Naive thymus-derived CD4-positive, alpha-beta T cell (primary cell): ENCODE measurements at regions of chr12 and their contacts with region 1.

Region 1: DNA sequence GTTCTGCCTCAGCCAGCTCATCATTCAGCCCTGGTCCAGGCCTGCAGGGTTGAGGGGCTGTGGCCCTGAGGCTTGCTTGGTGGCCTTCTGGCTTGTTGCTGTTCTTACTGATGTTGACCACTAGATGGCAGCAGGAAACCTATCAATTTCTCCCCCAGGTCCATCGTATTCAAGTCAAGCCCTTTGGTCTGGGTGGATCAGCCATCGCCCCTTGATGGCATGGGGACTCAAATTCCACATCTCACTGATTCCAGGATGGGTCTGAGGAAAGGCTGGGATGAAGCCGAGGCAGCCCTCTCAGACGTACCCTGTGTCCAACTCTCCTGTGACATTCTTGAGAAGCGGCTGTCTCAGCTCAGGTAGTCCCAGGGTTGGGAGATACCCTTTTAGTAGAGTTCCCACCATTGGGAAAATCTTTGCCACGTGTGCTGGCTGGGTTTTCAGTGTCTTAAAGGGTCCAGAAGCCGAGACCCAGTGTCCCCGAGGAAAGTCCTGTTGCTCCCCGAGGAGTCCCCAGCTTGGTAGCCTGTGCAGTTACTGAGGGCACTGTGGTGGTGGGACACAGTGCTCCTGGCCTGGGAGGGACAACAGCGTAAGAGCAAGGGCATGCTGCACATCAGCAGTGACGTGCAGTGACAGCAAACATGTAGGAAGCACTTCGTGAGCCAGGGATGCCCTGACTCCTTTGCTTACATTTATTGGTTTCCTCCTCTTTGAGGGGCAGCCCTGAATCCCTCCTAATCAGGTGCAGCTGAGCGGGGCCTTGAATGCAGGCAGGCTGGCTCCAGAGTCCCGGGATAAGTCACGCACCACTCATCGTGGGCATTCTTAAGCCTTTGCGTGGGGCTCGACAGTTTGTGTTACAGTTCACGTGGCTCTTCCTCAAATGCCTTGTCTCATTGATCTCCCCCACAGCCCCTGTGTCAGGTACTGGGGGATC is 58.6 kb downstream of the TSPAN9 start:
- DNase-seq: peak in 8 of 9 donors; percentile 18 to 55 (median 38)
- ATAC-seq: peak; percentile 69
- H3K4me3 ChIP-seq: no peak overlapping the region
- H3K4me3 Mint-ChIP-seq: no peak overlapping the region
- H3K27ac ChIP-seq: no peak overlapping the region
- H3K27ac Mint-ChIP-seq: no peak overlapping the region
- H3K4me1 ChIP-seq: no peaks in the 10 kb centered on the region
- H3K4me1 Mint-ChIP-seq: peaks cover 2 to 7% (median 3%) of the 10 kb centered on the region in 7 donors
- H3K27me3 ChIP-seq: peaks cover 0 to 9% of the 10 kb centered on the region in 2 donors
- H3K27me3 Mint-ChIP-seq: peaks cover 22 to 56% (median 46%) of the 10 kb centered on the region in 5 donors

Region 2: GRCh38 chr12:2431810-2432209 is 704.0 kb before region 1 on chr12:
- CTCF ChIA-PET with region 1: no interaction called
- POLR2A ChIA-PET with region 1: no interaction called
- intact Hi-C with region 1: no loop called
- DNase-seq: no peak
- ATAC-seq: no peak
- H3K4me3 ChIP-seq: no peak overlapping the region
- H3K4me3 Mint-ChIP-seq: no peak overlapping the region
- H3K27ac ChIP-seq: no peak overlapping the region
- H3K27ac Mint-ChIP-seq: no peak overlapping the region
- H3K4me1 ChIP-seq: no peaks in the 10 kb centered on the region
- H3K4me1 Mint-ChIP-seq: no peaks in the 10 kb centered on the region
- H3K27me3 ChIP-seq: no peaks in the 10 kb centered on the region
- H3K27me3 Mint-ChIP-seq: peaks cover 2 to 23% (median 17%) of the 10 kb centered on the region in 5 donors

Region 3: GRCh38 chr12:2974560-2974971 is 161.2 kb before region 1 on chr12:
- CTCF ChIA-PET with region 1: no interaction called
- POLR2A ChIA-PET with region 1: no interaction called
- intact Hi-C with region 1: no loop called
- DNase-seq: no peak
- ATAC-seq: no peak
- H3K4me3 ChIP-seq: no peak overlapping the region
- H3K4me3 Mint-ChIP-seq: no peak overlapping the region
- H3K27ac ChIP-seq: no peak overlapping the region
- H3K27ac Mint-ChIP-seq: no peak overlapping the region
- H3K4me1 ChIP-seq: no peaks in the 10 kb centered on the region
- H3K4me1 Mint-ChIP-seq: peaks cover 0 to 4% (median 0%) of the 10 kb centered on the region in 7 donors
- H3K27me3 ChIP-seq: no peaks in the 10 kb centered on the region
- H3K27me3 Mint-ChIP-seq: peaks cover 0 to 17% (median 6%) of the 10 kb centered on the region in 5 donors

Region 4: DNA sequence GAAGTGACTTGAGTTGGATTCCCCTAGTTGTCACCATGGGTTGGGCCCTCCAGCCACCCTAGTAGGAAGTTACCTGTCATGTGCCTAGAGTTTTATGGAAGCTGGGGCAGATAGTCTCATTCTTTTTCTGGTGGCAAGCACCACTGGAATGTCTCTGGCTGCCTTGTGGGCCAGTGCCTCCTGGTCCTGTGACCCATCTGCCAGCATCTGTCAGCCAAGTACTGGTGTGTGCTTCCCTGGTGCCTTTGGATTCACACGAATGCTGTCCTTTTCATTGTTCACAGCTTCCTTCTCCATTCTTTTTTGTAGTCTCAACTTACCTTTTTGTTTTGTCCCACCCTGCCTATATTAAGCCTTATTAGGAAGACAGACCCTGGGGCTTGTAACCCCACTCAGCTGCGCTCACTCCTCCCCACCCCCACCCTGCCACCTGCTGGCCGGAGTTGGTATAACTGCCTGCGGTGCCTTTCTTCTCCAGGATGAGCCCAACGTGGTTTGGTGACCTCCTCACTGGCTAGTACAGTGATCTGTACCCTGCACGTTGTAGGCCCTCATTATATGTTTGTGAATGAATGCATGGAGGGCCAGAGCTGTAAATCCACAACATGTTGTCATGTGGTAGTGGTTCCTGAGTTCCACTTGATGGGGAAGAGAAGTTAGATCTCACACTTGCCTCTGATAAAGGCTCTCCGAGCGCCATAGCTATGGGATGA is 67.1 kb after region 1 on chr12:
- CTCF ChIA-PET with region 1: no interaction called
- POLR2A ChIA-PET with region 1: no interaction called
- intact Hi-C with region 1: loop called (anchors 1 kb)
- DNase-seq: peak in 8 of 9 donors; percentile 17 to 62 (median 31)
- ATAC-seq: peak; percentile 64
- H3K4me3 ChIP-seq: no peak overlapping the region
- H3K4me3 Mint-ChIP-seq: peak overlapping the region in 1 of 10 donors; percentile 1
- H3K27ac ChIP-seq: no peak overlapping the region
- H3K27ac Mint-ChIP-seq: no peak overlapping the region
- H3K4me1 ChIP-seq: no peaks in the 10 kb centered on the region
- H3K4me1 Mint-ChIP-seq: peaks cover 0 to 10% (median 8%) of the 10 kb centered on the region in 7 donors
- H3K27me3 ChIP-seq: peaks cover 0 to 3% of the 10 kb centered on the region in 2 donors
- H3K27me3 Mint-ChIP-seq: peaks cover 29 to 41% (median 33%) of the 10 kb centered on the region in 5 donors

Region 5: GRCh38 chr12:3236345-3237187 is 100.8 kb after region 1 on chr12:
- CTCF ChIA-PET with region 1: no interaction called
- POLR2A ChIA-PET with region 1: no interaction called
- intact Hi-C with region 1: no loop called
- DNase-seq: no peak
- ATAC-seq: no peak
- H3K4me3 ChIP-seq: no peak overlapping the region
- H3K4me3 Mint-ChIP-seq: no peak overlapping the region
- H3K27ac ChIP-seq: no peak overlapping the region
- H3K27ac Mint-ChIP-seq: no peak overlapping the region
- H3K4me1 ChIP-seq: no peaks in the 10 kb centered on the region
- H3K4me1 Mint-ChIP-seq: no peaks in the 10 kb centered on the region
- H3K27me3 ChIP-seq: no peaks in the 10 kb centered on the region
- H3K27me3 Mint-ChIP-seq: peaks cover 0 to 24% (median 0%) of the 10 kb centered on the region in 5 donors

Region 6: GRCh38 chr12:3275171-3276041 is 139.6 kb after region 1 on chr12:
- CTCF ChIA-PET with region 1: interaction called, 5 read pairs
- POLR2A ChIA-PET with region 1: no interaction called
- intact Hi-C with region 1: loop called in 1 of 2 experiments (anchors 1 kb)
- DNase-seq: peak; percentile 24 to 75 (median 62)
- ATAC-seq: peak; percentile 74
- H3K4me3 ChIP-seq: no peak overlapping the region
- H3K4me3 Mint-ChIP-seq: peak overlapping the region in 3 of 10 donors; percentile 19 to 34 (median 32)
- H3K27ac ChIP-seq: no peak overlapping the region
- H3K27ac Mint-ChIP-seq: no peak overlapping the region
- H3K4me1 ChIP-seq: no peaks in the 10 kb centered on the region
- H3K4me1 Mint-ChIP-seq: no peaks in the 10 kb centered on the region
- H3K27me3 ChIP-seq: no peaks in the 10 kb centered on the region
- H3K27me3 Mint-ChIP-seq: peaks cover 5 to 30% (median 11%) of the 10 kb centered on the region in 5 donors

Region 7: DNA sequence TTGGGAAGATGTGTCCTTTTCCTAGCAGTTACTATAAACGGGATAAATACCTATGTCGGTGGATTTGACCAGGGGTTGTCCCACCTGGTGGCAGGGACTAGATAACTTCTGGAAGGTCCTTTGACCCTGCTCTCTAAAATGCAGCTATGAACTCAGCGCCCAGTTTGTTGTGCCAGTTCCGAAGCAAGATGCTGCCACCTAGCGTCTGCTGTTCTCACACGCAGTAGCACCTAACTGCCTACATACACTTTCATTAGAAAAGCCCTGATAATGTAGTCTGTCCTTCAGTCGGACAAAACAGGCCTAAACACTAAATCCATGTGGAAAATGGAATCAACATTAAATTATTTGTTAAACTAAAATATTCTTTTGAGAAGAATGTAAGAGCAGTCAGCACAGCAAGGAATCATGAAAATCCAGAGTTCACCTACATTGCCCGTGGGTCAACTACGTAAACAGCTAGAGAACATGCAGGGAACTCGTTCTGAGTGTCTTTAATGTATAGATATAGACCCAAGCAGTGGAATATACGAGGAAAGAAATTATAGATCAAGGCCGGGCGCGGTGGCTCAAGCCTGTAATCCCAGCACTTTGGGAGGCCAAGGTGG is 668.2 kb after region 1 on chr12:
- CTCF ChIA-PET with region 1: no interaction called
- POLR2A ChIA-PET with region 1: no interaction called
- intact Hi-C with region 1: loop called in 1 of 2 experiments (anchors 5 kb)
- DNase-seq: peak; percentile 27 to 63 (median 55)
- ATAC-seq: peak; percentile 82
- H3K4me3 ChIP-seq: no peak overlapping the region
- H3K4me3 Mint-ChIP-seq: no peak overlapping the region
- H3K27ac ChIP-seq: no peak overlapping the region
- H3K27ac Mint-ChIP-seq: no peak overlapping the region
- H3K4me1 ChIP-seq: no peaks in the 10 kb centered on the region
- H3K4me1 Mint-ChIP-seq: peaks cover 0 to 9% (median 0%) of the 10 kb centered on the region in 7 donors
- H3K27me3 ChIP-seq: no peaks in the 10 kb centered on the region
- H3K27me3 Mint-ChIP-seq: no peaks in the 10 kb centered on the region